PC-9 (cell line): ENCODE measurements at regions of chr4 and their contacts with region 1.

Region 1: DNA sequence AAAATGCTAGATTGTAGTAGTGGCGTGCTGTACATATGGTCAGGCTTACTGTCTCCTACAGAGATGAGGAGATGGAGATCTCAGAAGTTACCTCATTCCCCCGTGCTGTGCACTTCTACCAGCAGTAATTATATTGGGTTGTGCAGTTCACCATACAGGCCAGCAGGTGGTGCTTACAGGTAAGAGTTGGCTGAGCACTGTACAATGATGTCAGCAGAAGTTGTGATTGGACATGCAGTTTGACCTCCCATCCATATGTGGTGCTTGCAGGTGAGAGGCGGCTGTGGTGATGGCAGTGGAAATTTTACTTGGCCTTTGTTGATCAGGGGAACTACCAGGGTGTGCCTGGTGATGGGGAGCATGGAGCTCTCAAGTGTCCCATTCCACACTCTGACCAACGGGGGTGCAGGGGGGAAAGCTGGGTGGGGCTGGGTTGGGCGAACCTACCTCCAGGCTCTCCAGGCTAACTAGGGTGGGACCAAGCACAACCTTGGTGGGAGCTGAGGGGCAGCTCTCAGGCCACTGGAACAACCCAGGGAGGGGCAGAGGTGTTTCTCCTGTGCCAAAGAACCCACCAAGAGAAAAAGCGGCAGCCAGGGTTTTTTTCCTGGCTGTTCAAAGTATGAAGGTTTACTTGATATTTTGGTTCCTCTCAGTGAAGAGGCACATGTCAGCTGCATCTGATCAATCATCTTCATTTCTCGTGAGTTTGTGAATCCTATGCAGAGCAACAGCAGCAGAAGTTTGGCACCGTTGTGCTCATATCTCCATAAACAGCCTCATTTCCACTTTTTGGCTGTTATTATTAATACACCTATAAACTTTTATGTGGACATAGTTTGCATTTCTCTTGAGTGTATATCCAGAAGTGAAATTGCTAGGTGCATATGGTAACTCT is 73.8 kb upstream of the FREM3 start:
- DNase-seq: peak; percentile 35 to 41
- H3K4me3 ChIP-seq: no peak overlapping the region
- H3K27ac ChIP-seq: no peak overlapping the region
- H3K4me1 ChIP-seq: no peaks in the 10 kb centered on the region
- H3K27me3 ChIP-seq: no peaks in the 10 kb centered on the region
- CTCF ChIP-seq: peak; percentile 77

Region 2: GRCh38 chr4:144014808-144015207 is 240.6 kb after region 1 on chr4:
- CTCF ChIA-PET with region 1: no interaction called
- POLR2A ChIA-PET with region 1: no interaction called
- intact Hi-C with region 1: loop called (anchors 2 kb)
- DNase-seq: no peak
- H3K4me3 ChIP-seq: no peak overlapping the region
- H3K27ac ChIP-seq: no peak overlapping the region
- H3K4me1 ChIP-seq: no peaks in the 10 kb centered on the region
- H3K27me3 ChIP-seq: no peaks in the 10 kb centered on the region
- CTCF ChIP-seq: no peak

Region 3: DNA sequence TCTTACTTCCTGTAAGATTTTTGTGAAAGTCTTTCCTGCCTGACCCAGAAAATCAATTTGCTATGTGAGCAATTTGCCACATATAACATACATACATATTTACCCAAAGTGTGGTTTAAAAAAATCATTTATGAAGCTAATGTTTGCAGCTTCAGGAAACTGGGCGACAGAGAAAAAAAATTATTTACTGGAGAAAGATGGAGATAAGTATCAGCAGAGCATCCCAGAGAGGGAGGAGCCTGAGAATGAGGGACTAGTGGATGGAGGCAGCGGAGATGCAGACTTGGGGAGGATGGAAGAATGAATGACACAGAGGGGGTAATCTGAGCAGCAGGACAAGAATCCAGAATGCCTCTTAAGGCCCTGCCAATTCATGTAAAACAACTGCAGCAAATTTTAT is 367.2 kb after region 1 on chr4:
- CTCF ChIA-PET with region 1: no interaction called
- POLR2A ChIA-PET with region 1: no interaction called
- intact Hi-C with region 1: loop called (anchors 10 kb)
- DNase-seq: no peak
- H3K4me3 ChIP-seq: no peak overlapping the region
- H3K27ac ChIP-seq: no peak overlapping the region
- H3K4me1 ChIP-seq: no peaks in the 10 kb centered on the region
- H3K27me3 ChIP-seq: no peaks in the 10 kb centered on the region
- CTCF ChIP-seq: no peak